ENCODE measurements at regions of chr16 and their contacts with region 1.

Region 1: DNA sequence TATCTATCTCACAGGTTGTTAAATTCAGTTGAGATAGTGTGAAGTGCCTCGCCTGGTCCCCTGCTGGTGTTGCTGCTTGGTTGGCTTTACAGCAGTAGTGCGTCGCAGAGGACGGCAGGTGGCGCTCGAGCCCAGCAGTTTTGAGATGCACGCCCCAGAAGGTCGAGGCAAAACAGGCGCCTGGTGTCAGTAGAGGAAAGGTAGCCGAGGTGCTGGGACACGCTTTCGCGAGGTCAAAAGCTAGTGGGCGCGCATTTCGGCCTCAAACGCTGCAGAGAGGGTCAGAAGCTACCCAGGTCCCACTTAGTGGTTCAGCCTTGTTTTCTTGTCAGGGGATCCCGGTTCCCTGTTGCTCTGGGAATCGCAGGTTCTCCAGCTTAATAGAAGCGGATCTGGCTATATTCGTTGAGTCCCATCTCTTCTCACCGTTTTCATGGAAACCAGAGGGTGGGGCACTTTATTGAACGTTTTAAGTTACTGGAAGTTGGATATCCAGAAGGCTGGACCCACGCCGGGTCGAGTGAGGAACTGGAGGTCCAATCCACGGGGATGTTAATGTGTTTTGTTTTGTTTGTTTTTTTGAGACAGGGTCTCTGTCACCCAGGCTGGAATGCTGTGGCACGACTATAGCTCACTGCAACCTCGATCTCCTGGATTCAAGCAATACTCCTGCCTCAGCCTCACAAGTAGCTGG is 10.3 kb upstream of the ZFP90 start:
- DNase-seq: peak; percentile 72
- H3K4me3 ChIP-seq: peak overlapping the region; percentile 5 to 32 (median 30)
- H3K27ac ChIP-seq: no peak overlapping the region
- H3K4me1 ChIP-seq: peaks cover 19% of the 10 kb centered on the region
- H3K27me3 ChIP-seq: no peaks in the 10 kb centered on the region
- CTCF ChIP-seq: peak; percentile 82 to 91

Region 2: GRCh38 chr16:68406451-68407152 is 122.2 kb before region 1 on chr16:
- CTCF ChIA-PET with region 1: no interaction called
- dilution Hi-C with region 1: no loop called
- in situ Hi-C with region 1: no loop called
- intact Hi-C with region 1: no loop called
- DNase-seq: no peak
- H3K4me3 ChIP-seq: no peak overlapping the region
- H3K27ac ChIP-seq: no peak overlapping the region
- H3K4me1 ChIP-seq: peaks cover 8% of the 10 kb centered on the region
- H3K27me3 ChIP-seq: peaks cover 8% of the 10 kb centered on the region
- CTCF ChIP-seq: no peak

Region 3: GRCh38 chr16:68617734-68618133 is 88.9 kb after region 1 on chr16:
- CTCF ChIA-PET with region 1: interaction called, 18 read pairs
- dilution Hi-C with region 1: no loop called
- in situ Hi-C with region 1: no loop called
- intact Hi-C with region 1: no loop called
- DNase-seq: no peak
- H3K4me3 ChIP-seq: no peak overlapping the region
- H3K27ac ChIP-seq: no peak overlapping the region
- H3K4me1 ChIP-seq: peaks cover 8% of the 10 kb centered on the region
- H3K27me3 ChIP-seq: no peaks in the 10 kb centered on the region
- CTCF ChIP-seq: no peak

Region 4: DNA sequence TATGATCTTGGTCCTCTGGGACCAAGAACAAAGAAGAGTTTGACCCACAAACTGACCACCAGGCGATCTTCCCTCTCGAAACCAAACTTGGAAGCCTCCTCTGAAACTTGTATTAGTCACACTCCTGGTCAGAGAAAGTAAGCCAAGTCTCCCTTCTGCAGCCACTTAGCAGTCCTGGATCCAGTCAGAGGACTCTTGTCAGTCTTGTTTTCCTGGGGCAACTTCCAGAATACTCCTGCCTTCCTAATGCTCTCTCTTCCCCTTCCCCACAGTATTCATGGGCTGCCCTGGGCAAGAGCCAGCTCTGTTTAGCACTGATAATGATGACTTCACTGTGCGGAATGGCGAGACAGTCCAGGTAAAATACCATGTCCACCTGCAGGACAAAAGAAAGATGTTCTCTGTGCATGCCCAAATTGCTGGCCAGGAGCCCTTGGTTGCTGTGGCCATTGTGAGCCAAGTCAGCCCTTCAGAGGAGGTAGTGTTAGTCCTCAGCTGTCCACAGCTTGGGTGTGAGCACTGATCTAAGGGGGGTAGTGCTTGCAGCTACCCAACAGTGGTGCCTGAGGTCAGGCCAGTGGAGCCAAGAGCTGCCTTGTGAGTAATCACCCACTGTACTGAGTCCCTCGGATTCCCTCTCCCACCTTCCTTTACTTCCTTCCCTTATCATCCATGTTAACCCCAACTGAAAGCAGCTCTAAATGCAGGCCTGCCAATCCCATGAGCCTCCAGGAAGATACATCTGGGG is 147.5 kb after region 1 on chr16:
- CTCF ChIA-PET with region 1: no interaction called
- dilution Hi-C with region 1: no loop called
- in situ Hi-C with region 1: no loop called
- intact Hi-C with region 1: loop called (anchors 5 kb)
- DNase-seq: peak; percentile 88
- H3K4me3 ChIP-seq: no peak overlapping the region
- H3K27ac ChIP-seq: peak overlapping the region; percentile 78
- H3K4me1 ChIP-seq: peaks cover 17% of the 10 kb centered on the region
- H3K27me3 ChIP-seq: no peaks in the 10 kb centered on the region
- CTCF ChIP-seq: no peak

Region 5: GRCh38 chr16:68737046-68737729 is 208.4 kb after region 1 on chr16 and contains the start of gene CDH1:
- CTCF ChIA-PET with region 1: no interaction called
- dilution Hi-C with region 1: no loop called
- in situ Hi-C with region 1: no loop called
- intact Hi-C with region 1: loop called (anchors 1 kb)
- DNase-seq: peak; percentile 89
- H3K4me3 ChIP-seq: peak within 1 kb of the TSS; percentile 88 to 97 (median 93)
- H3K27ac ChIP-seq: peak within 1 kb of the TSS; percentile 97
- H3K4me1 ChIP-seq: peaks cover 38% of the 10 kb centered on the region
- H3K27me3 ChIP-seq: no peaks in the 10 kb centered on the region
- CTCF ChIP-seq: no peak
- total RNA-seq, gene CDH1: 355 to 369 TPM

Region 6: GRCh38 chr16:68843482-68844210 is 314.8 kb after region 1 on chr16 and contains the start of gene TANGO6:
- CTCF ChIA-PET with region 1: no interaction called
- dilution Hi-C with region 1: no loop called
- in situ Hi-C with region 1: no loop called
- intact Hi-C with region 1: loop called (anchors 1 kb)
- DNase-seq: peak; percentile 64
- H3K4me3 ChIP-seq: peak within 1 kb of the TSS; percentile 71 to 75 (median 73)
- H3K27ac ChIP-seq: peak within 1 kb of the TSS; percentile 52
- H3K4me1 ChIP-seq: peaks cover 4% of the 10 kb centered on the region
- H3K27me3 ChIP-seq: no peaks in the 10 kb centered on the region
- CTCF ChIP-seq: peak in 1 of 2 donors; percentile 20
- total RNA-seq, gene TANGO6: 18.2 to 24.5 TPM

Region 7: DNA sequence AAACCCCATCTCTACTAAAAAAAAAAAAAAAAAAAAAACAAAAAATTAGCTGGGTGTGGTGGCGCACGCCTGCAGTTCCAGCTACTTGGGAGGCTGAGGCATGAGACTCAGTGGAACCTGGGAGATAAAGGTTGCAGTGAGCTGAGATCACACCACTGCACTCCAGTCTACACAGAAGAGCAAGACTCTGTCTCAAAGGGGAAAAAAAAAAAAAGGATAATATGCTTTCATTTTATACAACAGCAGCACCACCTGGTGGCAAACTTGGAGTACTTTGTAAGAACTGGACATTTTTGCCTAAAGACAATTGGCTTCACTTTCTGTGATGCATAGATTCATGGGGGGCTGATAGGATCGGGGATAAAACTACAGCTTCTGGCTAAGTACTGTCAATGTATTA is 595.1 kb after region 1 on chr16:
- CTCF ChIA-PET with region 1: no interaction called
- dilution Hi-C with region 1: no loop called
- in situ Hi-C with region 1: no loop called
- intact Hi-C with region 1: loop called (anchors 2 kb)
- DNase-seq: peak; percentile 56
- H3K4me3 ChIP-seq: no peak overlapping the region
- H3K27ac ChIP-seq: no peak overlapping the region
- H3K4me1 ChIP-seq: no peaks in the 10 kb centered on the region
- H3K27me3 ChIP-seq: no peaks in the 10 kb centered on the region
- CTCF ChIP-seq: peak; percentile 42 to 71